Transverse colon (tissue), 4 donors: ENCODE measurements at regions of chr18 and their contacts with region 1.

Region 1: GRCh38 chr18:48085781-48086487 is 155.5 kb upstream of the SMAD2 start:
- DNase-seq: peak; percentile 31
- H3K4me3 ChIP-seq: no peak overlapping the region
- H3K27ac ChIP-seq: peak overlapping the region in 3 of 4 donors; percentile 25 to 46 (median 43)
- H3K4me1 ChIP-seq: peaks cover 0 to 18% (median 4%) of the 10 kb centered on the region in 4 donors
- H3K27me3 ChIP-seq: no peaks in the 10 kb centered on the region
- CTCF ChIP-seq: no peak
- EP300 ChIP-seq: no peak
- POLR2A ChIP-seq: peak; percentile 39

Region 2: DNA sequence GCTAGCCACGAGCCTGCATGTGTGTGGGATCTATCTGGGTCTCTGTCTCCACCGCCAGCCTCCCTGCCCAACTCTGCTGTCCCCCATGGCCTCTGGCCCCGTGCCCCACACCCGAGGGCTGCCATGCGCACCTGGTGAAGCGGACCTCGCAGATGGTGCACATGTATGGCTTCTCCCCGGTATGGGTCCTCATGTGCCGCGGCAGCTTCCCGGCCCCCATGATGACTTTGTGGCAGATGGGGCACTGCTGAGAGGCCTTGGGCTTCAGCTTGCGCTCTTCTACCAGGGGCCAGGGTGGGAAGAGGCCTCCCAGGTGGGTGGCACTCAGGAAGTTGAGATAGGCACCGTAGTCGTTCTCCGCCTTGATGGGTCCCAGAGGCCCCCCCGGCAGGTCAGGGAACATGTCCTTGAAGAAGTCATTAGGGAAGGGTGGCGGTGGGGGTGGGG is 46.1 kb before region 1 on chr18:
- in situ Hi-C with region 1: no loop called
- intact Hi-C with region 1: loop called (anchors 1 kb)
- DNase-seq: no peak
- H3K4me3 ChIP-seq: no peak overlapping the region
- H3K27ac ChIP-seq: no peak overlapping the region
- H3K4me1 ChIP-seq: no peaks in the 10 kb centered on the region
- H3K27me3 ChIP-seq: no peaks in the 10 kb centered on the region
- CTCF ChIP-seq: no peak
- EP300 ChIP-seq: no peak
- POLR2A ChIP-seq: no peak